CD8-positive, alpha-beta T cell (primary cell): ENCODE measurements at regions of chr18 and their contacts with region 1.

Region 1: GRCh38 chr18:46148810-46149209 is 44.6 kb downstream of the HAUS1 start:
- DNase-seq: peak in 7 of 9 experiments; percentile 19 to 68 (median 54)
- ATAC-seq: peak; percentile 66
- H3K4me3 ChIP-seq: no peak overlapping the region
- H3K4me3 Mint-ChIP-seq: no peak overlapping the region
- H3K27ac ChIP-seq: no peak overlapping the region
- H3K27ac Mint-ChIP-seq: no peak overlapping the region
- H3K4me1 ChIP-seq: peaks cover 41% of the 10 kb centered on the region
- H3K4me1 Mint-ChIP-seq: peaks cover 40% of the 10 kb centered on the region
- H3K27me3 ChIP-seq: no peaks in the 10 kb centered on the region
- H3K27me3 Mint-ChIP-seq: no peaks in the 10 kb centered on the region
- CTCF ChIP-seq: peak; percentile 82

Region 2: DNA sequence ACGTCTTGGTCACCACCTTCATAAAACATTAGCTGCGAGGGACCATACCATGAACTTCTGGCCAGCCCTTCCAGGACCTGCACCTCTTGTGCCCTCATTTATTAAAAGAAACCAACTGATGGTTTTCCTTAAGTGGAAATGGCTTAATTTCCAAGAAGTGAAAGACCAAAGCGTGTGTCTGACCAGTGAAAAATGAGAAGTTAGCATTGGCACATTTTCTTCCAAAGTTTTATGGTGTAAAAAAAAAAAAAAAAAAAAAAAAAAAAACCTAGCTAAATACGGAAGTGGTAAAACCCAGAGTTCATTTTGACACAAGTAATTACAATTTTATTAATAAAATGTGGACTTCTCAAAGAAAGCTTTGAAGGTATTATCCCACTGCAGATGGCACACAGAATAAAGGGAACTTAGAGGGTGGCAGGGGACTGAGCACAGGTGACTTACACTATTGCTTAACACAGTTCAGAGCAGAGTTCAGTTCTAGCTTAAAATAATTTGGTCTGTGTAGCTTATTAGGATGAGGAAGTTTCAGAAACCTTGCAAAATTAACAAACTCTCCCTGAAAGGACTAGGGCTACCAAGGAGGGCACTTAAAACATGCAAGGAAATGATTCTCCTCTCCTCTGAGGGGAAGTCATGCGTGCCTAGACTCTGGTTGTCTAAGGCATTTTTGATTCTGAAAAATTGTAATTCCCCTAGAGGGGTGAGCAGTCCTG is 139.5 kb before region 1 on chr18:
- CTCF ChIA-PET with region 1: no interaction called
- POLR2A ChIA-PET with region 1: no interaction called
- intact Hi-C with region 1: no loop called
- DNase-seq: peak in 1 of 9 experiments; percentile 24
- ATAC-seq: no peak
- H3K4me3 ChIP-seq: no peak overlapping the region
- H3K4me3 Mint-ChIP-seq: no peak overlapping the region
- H3K27ac ChIP-seq: no peak overlapping the region
- H3K27ac Mint-ChIP-seq: no peak overlapping the region
- H3K4me1 ChIP-seq: no peaks in the 10 kb centered on the region
- H3K4me1 Mint-ChIP-seq: no peaks in the 10 kb centered on the region
- H3K27me3 ChIP-seq: no peaks in the 10 kb centered on the region
- H3K27me3 Mint-ChIP-seq: no peaks in the 10 kb centered on the region
- CTCF ChIP-seq: no peak

Region 3: GRCh38 chr18:46134920-46135675 is 13.7 kb before region 1 on chr18:
- CTCF ChIA-PET with region 1: interaction called, 31 read pairs
- POLR2A ChIA-PET with region 1: no interaction called
- intact Hi-C with region 1: no loop called
- DNase-seq: no peak
- ATAC-seq: no peak
- H3K4me3 ChIP-seq: no peak overlapping the region
- H3K4me3 Mint-ChIP-seq: no peak overlapping the region
- H3K27ac ChIP-seq: no peak overlapping the region
- H3K27ac Mint-ChIP-seq: peak overlapping the region; percentile 24
- H3K4me1 ChIP-seq: no peaks in the 10 kb centered on the region
- H3K4me1 Mint-ChIP-seq: no peaks in the 10 kb centered on the region
- H3K27me3 ChIP-seq: no peaks in the 10 kb centered on the region
- H3K27me3 Mint-ChIP-seq: no peaks in the 10 kb centered on the region
- CTCF ChIP-seq: no peak

Region 4: GRCh38 chr18:46213295-46213694 is 64.5 kb after region 1 on chr18:
- CTCF ChIA-PET with region 1: interaction called, 9 read pairs
- POLR2A ChIA-PET with region 1: no interaction called
- intact Hi-C with region 1: loop called (anchors 1 to 2 kb)
- DNase-seq: peak in 2 of 9 experiments; percentile 44 to 62
- ATAC-seq: peak; percentile 63
- H3K4me3 ChIP-seq: no peak overlapping the region
- H3K4me3 Mint-ChIP-seq: peak overlapping the region; percentile 30
- H3K27ac ChIP-seq: no peak overlapping the region
- H3K27ac Mint-ChIP-seq: no peak overlapping the region
- H3K4me1 ChIP-seq: peaks cover 53% of the 10 kb centered on the region
- H3K4me1 Mint-ChIP-seq: peaks cover 82% of the 10 kb centered on the region
- H3K27me3 ChIP-seq: no peaks in the 10 kb centered on the region
- H3K27me3 Mint-ChIP-seq: no peaks in the 10 kb centered on the region
- CTCF ChIP-seq: peak; percentile 85

Region 5: GRCh38 chr18:46346213-46346612 is 197.4 kb after region 1 on chr18:
- CTCF ChIA-PET with region 1: no interaction called
- POLR2A ChIA-PET with region 1: no interaction called
- intact Hi-C with region 1: no loop called
- DNase-seq: no peak
- ATAC-seq: no peak
- H3K4me3 ChIP-seq: no peak overlapping the region
- H3K4me3 Mint-ChIP-seq: no peak overlapping the region
- H3K27ac ChIP-seq: no peak overlapping the region
- H3K27ac Mint-ChIP-seq: no peak overlapping the region
- H3K4me1 ChIP-seq: peaks cover 20% of the 10 kb centered on the region
- H3K4me1 Mint-ChIP-seq: peaks cover 18% of the 10 kb centered on the region
- H3K27me3 ChIP-seq: no peaks in the 10 kb centered on the region
- H3K27me3 Mint-ChIP-seq: no peaks in the 10 kb centered on the region
- CTCF ChIP-seq: no peak

Region 6: DNA sequence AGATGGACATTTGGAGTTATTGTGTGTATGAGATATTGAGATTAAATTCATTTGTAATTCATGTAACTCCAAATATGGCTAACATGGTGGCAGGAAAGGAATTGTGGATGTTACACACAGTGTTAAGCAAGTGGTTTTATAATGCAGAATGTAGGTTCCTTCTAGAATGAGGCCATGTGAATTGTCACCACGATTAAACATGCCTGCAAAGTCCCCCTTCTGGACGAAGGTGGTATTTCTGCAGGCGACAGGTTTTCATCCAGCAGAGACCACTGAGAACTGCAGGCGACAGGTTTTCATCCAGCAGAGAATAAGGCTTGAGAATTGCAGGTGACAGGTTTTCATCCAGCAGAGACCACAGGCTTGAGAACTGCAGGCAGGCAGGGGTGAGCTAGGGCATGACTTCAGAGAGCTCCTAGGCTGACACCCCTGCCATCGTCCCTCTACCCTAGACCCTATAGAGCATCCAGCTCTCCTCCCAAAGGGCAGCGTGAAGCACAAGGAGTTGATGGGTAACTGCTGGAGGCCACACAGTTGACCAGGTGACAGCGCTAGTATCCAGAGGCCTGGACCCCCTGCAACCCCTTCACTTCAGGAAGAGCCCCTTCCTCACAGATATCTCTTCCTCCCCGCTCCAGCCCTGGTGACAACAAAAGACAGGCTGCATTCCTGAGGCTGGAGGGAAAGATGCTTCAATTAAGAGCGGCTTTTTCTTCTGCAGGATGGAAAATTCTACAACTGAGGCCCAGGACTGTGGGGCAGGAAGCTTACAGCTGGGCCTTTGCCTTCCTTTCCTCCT is 332.4 kb after region 1 on chr18:
- CTCF ChIA-PET with region 1: interaction called, 11 read pairs
- POLR2A ChIA-PET with region 1: no interaction called
- intact Hi-C with region 1: loop called in 1 of 2 experiments (anchors 2 kb)
- DNase-seq: peak; percentile 8 to 69 (median 56)
- ATAC-seq: peak; percentile 64
- H3K4me3 ChIP-seq: no peak overlapping the region
- H3K4me3 Mint-ChIP-seq: no peak overlapping the region
- H3K27ac ChIP-seq: no peak overlapping the region
- H3K27ac Mint-ChIP-seq: no peak overlapping the region
- H3K4me1 ChIP-seq: no peaks in the 10 kb centered on the region
- H3K4me1 Mint-ChIP-seq: no peaks in the 10 kb centered on the region
- H3K27me3 ChIP-seq: no peaks in the 10 kb centered on the region
- H3K27me3 Mint-ChIP-seq: peaks cover 13% of the 10 kb centered on the region
- CTCF ChIP-seq: peak; percentile 68

Region 7: GRCh38 chr18:46518438-46518837 is 369.6 kb after region 1 on chr18:
- CTCF ChIA-PET with region 1: no interaction called
- POLR2A ChIA-PET with region 1: no interaction called
- intact Hi-C with region 1: no loop called
- DNase-seq: no peak
- ATAC-seq: no peak
- H3K4me3 ChIP-seq: no peak overlapping the region
- H3K4me3 Mint-ChIP-seq: no peak overlapping the region
- H3K27ac ChIP-seq: no peak overlapping the region
- H3K27ac Mint-ChIP-seq: no peak overlapping the region
- H3K4me1 ChIP-seq: no peaks in the 10 kb centered on the region
- H3K4me1 Mint-ChIP-seq: no peaks in the 10 kb centered on the region
- H3K27me3 ChIP-seq: no peaks in the 10 kb centered on the region
- H3K27me3 Mint-ChIP-seq: peaks cover 5% of the 10 kb centered on the region
- CTCF ChIP-seq: no peak

Region 8: DNA sequence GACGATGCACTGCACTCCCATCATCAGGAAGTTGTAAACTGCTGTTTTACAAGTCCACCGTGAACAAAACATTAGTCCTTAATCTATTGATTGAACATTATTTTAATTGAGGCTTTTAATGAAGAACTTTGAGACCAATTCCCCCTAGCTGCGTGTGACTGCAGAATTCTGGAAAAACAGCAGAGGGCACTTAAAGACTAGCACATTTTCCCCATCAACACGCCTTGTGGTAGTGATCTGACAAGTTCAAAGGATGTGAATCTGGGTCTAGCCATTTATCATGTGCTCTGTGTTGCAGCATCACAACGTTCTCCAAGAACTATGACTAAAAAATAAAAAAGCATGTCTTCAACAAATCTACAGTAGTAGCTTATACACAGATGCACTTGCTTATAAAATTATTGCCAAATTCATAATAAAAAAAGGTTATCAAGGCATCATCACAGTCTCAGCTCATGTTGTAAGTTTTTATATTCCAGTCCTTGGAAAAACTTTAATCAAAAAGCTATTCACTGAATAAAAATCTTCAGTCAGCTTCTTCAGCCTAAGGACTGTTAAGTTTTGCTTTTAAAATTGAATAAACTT is 1066.8 kb after region 1 on chr18:
- CTCF ChIA-PET with region 1: no interaction called
- POLR2A ChIA-PET with region 1: no interaction called
- intact Hi-C with region 1: no loop called
- DNase-seq: peak in 2 of 9 experiments; percentile 26 to 43
- ATAC-seq: no peak
- H3K4me3 ChIP-seq: no peak overlapping the region
- H3K4me3 Mint-ChIP-seq: no peak overlapping the region
- H3K27ac ChIP-seq: no peak overlapping the region
- H3K27ac Mint-ChIP-seq: no peak overlapping the region
- H3K4me1 ChIP-seq: no peaks in the 10 kb centered on the region
- H3K4me1 Mint-ChIP-seq: no peaks in the 10 kb centered on the region
- H3K27me3 ChIP-seq: no peaks in the 10 kb centered on the region
- H3K27me3 Mint-ChIP-seq: peaks cover 39% of the 10 kb centered on the region
- CTCF ChIP-seq: no peak